AG04449 (cell line): ENCODE measurements at regions of chr9 and their contacts with region 1.

Region 1: GRCh38 chr9:97982683-97983588 is at the start of gene ANP32B:
- DNase-seq: peak; percentile 36
- H3K4me3 ChIP-seq: peak within 1 kb of the TSS; percentile 84
- CTCF ChIP-seq: peak; percentile 88

Region 2: GRCh38 chr9:97993000-97993399 is 10.1 kb after region 1 on chr9:
- CTCF ChIA-PET with region 1: interaction called, 17 read pairs
- POLR2A ChIA-PET with region 1: no interaction called
- DNase-seq: no peak
- H3K4me3 ChIP-seq: no peak overlapping the region
- CTCF ChIP-seq: no peak

Region 3: GRCh38 chr9:98002808-98003207 is 19.9 kb after region 1 on chr9:
- CTCF ChIA-PET with region 1: interaction called, 14 read pairs
- POLR2A ChIA-PET with region 1: no interaction called
- DNase-seq: no peak
- H3K4me3 ChIP-seq: no peak overlapping the region
- CTCF ChIP-seq: no peak

Region 4: DNA sequence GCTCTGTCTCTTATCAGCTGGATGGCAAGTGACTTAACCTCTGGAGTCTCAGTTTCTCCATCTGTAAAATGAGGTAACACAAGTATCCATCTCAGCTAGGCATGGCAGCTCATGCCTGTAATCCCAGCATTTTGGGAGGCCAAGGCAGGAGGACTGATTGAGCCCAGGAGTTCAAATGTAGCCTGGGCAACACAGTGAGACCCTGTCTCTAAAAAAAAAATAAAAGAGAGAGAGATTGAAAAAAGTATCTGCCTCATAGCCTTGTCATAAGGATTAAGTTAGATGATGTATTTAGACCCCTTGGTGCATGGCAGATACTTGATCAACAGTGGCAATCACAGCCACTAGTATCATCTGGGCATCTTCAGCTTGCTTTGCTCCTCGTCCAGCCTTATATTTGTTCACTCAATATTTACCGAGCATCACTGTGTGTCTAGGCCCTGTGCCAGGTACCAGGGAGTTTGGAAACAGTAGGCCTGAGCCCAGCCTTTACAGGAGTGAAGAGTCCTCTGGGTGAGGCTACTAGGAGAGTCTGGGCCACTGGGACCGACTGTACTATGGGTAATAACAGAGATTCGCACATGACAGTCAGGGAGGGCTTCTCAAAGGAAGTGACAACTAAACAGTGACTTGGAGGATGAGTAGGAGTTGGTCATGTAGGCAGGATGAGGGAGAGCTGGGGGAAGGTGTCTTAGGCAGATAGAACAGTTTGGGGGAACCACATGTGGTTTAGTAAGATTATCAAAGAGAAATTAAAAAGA is 175.3 kb after region 1 on chr9:
- CTCF ChIA-PET with region 1: no interaction called
- POLR2A ChIA-PET with region 1: no interaction called
- DNase-seq: no peak
- H3K4me3 ChIP-seq: no peak overlapping the region
- CTCF ChIP-seq: no peak